HepG2 (cell line): ENCODE measurements at regions of chr1 and their contacts with region 1.

Region 1: DNA sequence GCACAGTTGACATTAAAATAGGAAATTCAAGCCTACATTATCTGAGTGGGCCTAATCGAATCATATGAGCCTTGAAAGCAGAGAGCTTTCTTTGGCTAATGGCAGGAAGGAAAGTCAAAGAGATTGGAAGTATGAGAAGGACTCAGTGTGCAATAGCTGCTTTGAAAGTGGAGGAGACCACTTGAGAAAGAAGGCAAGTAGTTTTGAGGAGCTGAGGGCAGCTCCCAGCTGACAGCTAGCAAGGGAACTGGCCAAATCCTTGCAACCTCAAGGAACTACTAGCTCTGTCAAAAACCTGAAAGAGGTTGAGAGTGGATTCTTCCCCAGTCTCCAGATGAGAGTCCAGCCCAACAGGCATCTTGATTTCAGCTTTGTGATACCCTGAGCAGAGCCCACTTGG is 149.0 kb upstream of the CACYBP start:
- DNase-seq: no peak
- ATAC-seq: no peak
- H3K4me3 ChIP-seq: no peak overlapping the region
- H3K27ac ChIP-seq: no peak overlapping the region
- H3K4me1 ChIP-seq: no peaks in the 10 kb centered on the region
- H3K27me3 ChIP-seq: no peaks in the 10 kb centered on the region
- CTCF ChIP-seq: no peak
- EP300 ChIP-seq: no peak
- POLR2A ChIP-seq: no peak
- RAD21 ChIP-seq: no peak

Region 2: DNA sequence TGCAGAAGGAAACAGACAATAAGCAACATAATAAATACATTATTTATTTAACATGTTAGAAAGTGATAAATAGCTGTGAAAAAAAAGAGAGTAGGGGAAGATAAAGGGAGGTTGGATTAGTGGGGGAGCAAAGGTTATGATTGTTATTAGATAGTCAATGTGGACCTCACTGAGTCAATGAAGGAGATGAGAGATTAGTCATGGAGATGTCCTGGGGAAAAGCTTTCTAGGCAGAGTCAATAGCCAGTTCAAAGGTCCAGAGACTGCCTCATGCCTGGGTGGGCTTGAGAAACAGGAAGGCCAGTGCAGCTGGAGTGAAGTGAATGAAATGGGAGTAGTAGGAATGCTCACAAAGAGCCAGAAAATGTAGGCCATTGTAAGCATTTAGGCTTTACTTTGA is 38.1 kb before region 1 on chr1:
- CTCF ChIA-PET with region 1: no interaction called
- POLR2A ChIA-PET with region 1: no interaction called
- in situ Hi-C with region 1: no loop called
- intact Hi-C with region 1: loop called (anchors 1 kb)
- DNase-seq: peak; percentile 95
- ATAC-seq: peak; percentile 100
- H3K4me3 ChIP-seq: no peak overlapping the region
- H3K27ac ChIP-seq: peak overlapping the region; percentile 23
- H3K4me1 ChIP-seq: peaks cover 23% of the 10 kb centered on the region
- H3K27me3 ChIP-seq: no peaks in the 10 kb centered on the region
- CTCF ChIP-seq: no peak
- EP300 ChIP-seq: peak; percentile 70 to 93
- POLR2A ChIP-seq: no peak
- RAD21 ChIP-seq: no peak